Panc1 (cell line): ENCODE measurements at regions of chr11 and their contacts with region 1.

Region 1: GRCh38 chr11:102111011-102111786 is 952 bp downstream of the YAP1 start:
- DNase-seq: no peak
- ATAC-seq: peak; percentile 66
- H3K4me3 ChIP-seq: peak overlapping the region; percentile 80 to 83
- H3K27ac ChIP-seq: peak overlapping the region; percentile 95
- H3K4me1 ChIP-seq: peaks cover 47% of the 10 kb centered on the region
- H3K27me3 ChIP-seq: no peaks in the 10 kb centered on the region
- CTCF ChIP-seq: peak; percentile 84

Region 2: GRCh38 chr11:102157219-102157618 is 46.0 kb after region 1 on chr11:
- CTCF ChIA-PET with region 1: no interaction called
- POLR2A ChIA-PET with region 1: interaction called, 21 read pairs
- in situ Hi-C with region 1: no loop called
- intact Hi-C with region 1: no loop called
- DNase-seq: no peak
- ATAC-seq: peak; percentile 90
- H3K4me3 ChIP-seq: no peak overlapping the region
- H3K27ac ChIP-seq: peak overlapping the region; percentile 83
- H3K4me1 ChIP-seq: peaks cover 80% of the 10 kb centered on the region
- H3K27me3 ChIP-seq: no peaks in the 10 kb centered on the region
- CTCF ChIP-seq: no peak

Region 3: GRCh38 chr11:102653744-102654291 is 542.6 kb after region 1 on chr11:
- CTCF ChIA-PET with region 1: no interaction called
- POLR2A ChIA-PET with region 1: no interaction called
- in situ Hi-C with region 1: no loop called
- intact Hi-C with region 1: no loop called
- DNase-seq: no peak
- ATAC-seq: no peak
- H3K4me3 ChIP-seq: no peak overlapping the region
- H3K27ac ChIP-seq: no peak overlapping the region
- H3K4me1 ChIP-seq: no peaks in the 10 kb centered on the region
- H3K27me3 ChIP-seq: no peaks in the 10 kb centered on the region
- CTCF ChIP-seq: no peak